ENCODE measurements at regions of chr2 and their contacts with region 1.

Region 1: DNA sequence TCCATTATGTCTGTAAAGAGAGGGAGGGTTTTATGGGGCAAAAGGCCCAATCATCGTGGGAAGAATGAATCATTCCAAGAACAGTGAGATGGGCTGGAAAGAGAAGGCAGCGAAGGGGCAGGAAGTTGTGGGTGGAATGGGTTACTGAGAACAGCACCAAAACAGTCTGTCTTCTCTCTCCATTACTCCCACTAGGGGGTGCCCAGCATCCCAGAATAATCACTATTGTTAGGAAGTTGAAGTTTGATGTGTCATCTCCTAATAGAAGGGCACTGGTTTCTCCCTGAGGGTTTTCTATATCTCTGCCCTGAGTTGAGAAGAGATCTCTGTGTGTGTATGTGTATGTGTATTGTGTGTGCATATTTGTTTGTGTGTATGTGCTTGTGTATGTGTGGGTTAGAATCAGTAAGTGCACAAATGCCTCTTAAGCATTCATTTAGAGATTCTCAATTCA is 76.6 kb upstream of the MAP4K3 start:
- DNase-seq: peak; percentile 37
- H3K4me3 Mint-ChIP-seq: peak overlapping the region; percentile 3
- H3K27ac Mint-ChIP-seq: peak overlapping the region; percentile 66
- H3K4me1 Mint-ChIP-seq: peaks cover 50% of the 10 kb centered on the region
- H3K27me3 Mint-ChIP-seq: peaks cover 2% of the 10 kb centered on the region

Region 2: DNA sequence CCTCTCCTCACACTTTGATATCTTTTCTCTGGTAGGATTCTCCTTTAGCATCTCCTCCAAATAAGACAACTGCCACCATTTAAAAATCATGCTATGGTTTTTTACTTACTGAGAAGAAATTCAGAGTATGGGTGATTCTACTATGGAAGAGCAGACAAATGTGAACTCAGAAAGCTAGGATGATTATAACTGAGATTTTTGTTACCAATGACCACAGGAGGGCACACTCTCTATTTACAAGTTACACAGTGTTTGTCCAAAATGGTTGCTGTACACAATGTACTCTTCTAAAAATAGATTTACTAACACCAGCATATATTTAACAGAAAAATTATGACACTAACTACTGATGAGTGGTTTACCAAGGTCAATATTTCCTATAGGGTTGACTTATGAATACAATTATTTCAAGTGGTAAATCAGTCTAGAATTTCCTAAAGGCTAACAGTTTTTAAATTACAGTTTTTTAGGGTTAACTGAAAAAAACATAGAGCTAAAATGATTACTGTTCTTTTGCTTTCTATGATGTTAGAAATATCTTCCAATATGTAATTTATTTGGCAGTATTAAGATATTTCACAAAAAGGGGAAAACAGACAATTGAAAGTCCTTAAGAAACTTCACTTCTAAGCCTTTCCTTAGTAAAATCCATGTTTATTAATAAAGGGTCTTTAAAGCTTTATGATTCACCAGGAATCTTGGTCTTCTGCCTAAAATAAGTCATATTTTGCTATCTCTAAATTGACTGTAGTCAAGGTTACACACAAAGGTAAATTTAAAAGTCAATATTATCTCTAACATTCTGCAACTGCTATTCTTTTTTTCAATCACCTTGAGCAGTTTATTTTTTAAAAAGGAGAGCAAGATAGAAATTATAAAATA is 133.8 kb before region 1 on chr2:
- intact Hi-C with region 1: loop called (anchors 1 kb)
- DNase-seq: no peak
- H3K4me3 Mint-ChIP-seq: no peak overlapping the region
- H3K27ac Mint-ChIP-seq: peak overlapping the region; percentile 67
- H3K4me1 Mint-ChIP-seq: peaks cover 39% of the 10 kb centered on the region
- H3K27me3 Mint-ChIP-seq: no peaks in the 10 kb centered on the region

Region 3: GRCh38 chr2:39469807-39470206 is 43.9 kb before region 1 on chr2:
- intact Hi-C with region 1: loop called (anchors 1 kb)
- DNase-seq: no peak
- H3K4me3 Mint-ChIP-seq: no peak overlapping the region
- H3K27ac Mint-ChIP-seq: no peak overlapping the region
- H3K4me1 Mint-ChIP-seq: peaks cover 12% of the 10 kb centered on the region
- H3K27me3 Mint-ChIP-seq: peaks cover 6% of the 10 kb centered on the region

Region 4: GRCh38 chr2:39537150-39537549 is 23.5 kb after region 1 on chr2:
- intact Hi-C with region 1: loop called (anchors 1 kb)
- DNase-seq: no peak
- H3K4me3 Mint-ChIP-seq: no peak overlapping the region
- H3K27ac Mint-ChIP-seq: no peak overlapping the region
- H3K4me1 Mint-ChIP-seq: peaks cover 12% of the 10 kb centered on the region
- H3K27me3 Mint-ChIP-seq: peaks cover 4% of the 10 kb centered on the region

Region 5: GRCh38 chr2:39728941-39729351 is 215.3 kb after region 1 on chr2:
- intact Hi-C with region 1: loop called (anchors 5 kb)
- DNase-seq: no peak
- H3K4me3 Mint-ChIP-seq: no peak overlapping the region
- H3K27ac Mint-ChIP-seq: no peak overlapping the region
- H3K4me1 Mint-ChIP-seq: no peaks in the 10 kb centered on the region
- H3K27me3 Mint-ChIP-seq: peaks cover 2% of the 10 kb centered on the region

Region 6: GRCh38 chr2:39996653-39997080 is 483.0 kb after region 1 on chr2:
- intact Hi-C with region 1: loop called (anchors 5 kb)
- DNase-seq: no peak
- H3K4me3 Mint-ChIP-seq: no peak overlapping the region
- H3K27ac Mint-ChIP-seq: peak overlapping the region; percentile 18
- H3K4me1 Mint-ChIP-seq: peaks cover 17% of the 10 kb centered on the region
- H3K27me3 Mint-ChIP-seq: peaks cover 1% of the 10 kb centered on the region